Activated naive CD4-positive, alpha-beta T cell treated with anti-CD3 and anti-CD28 coated beads for 36 hours (primary cell): ENCODE measurements at regions of chr16 and their contacts with region 1.

Region 1: GRCh38 chr16:57265850-57266530 is 18.5 kb downstream of the PLLP start:
- DNase-seq: no peak
- H3K4me3 Mint-ChIP-seq: no peak overlapping the region
- H3K27ac Mint-ChIP-seq: peak overlapping the region; percentile 73
- H3K4me1 Mint-ChIP-seq: peaks cover 49% of the 10 kb centered on the region
- H3K27me3 Mint-ChIP-seq: no peaks in the 10 kb centered on the region

Region 2: GRCh38 chr16:57235128-57236021 is 30.6 kb before region 1 on chr16:
- CTCF ChIA-PET with region 1: no interaction called
- intact Hi-C with region 1: no loop called
- DNase-seq: peak; percentile 67
- H3K4me3 Mint-ChIP-seq: no peak overlapping the region
- H3K27ac Mint-ChIP-seq: peak overlapping the region; percentile 6
- H3K4me1 Mint-ChIP-seq: peaks cover 14% of the 10 kb centered on the region
- H3K27me3 Mint-ChIP-seq: no peaks in the 10 kb centered on the region

Region 3: GRCh38 chr16:57277586-57277985 is 11.6 kb after region 1 on chr16:
- CTCF ChIA-PET with region 1: interaction called, 8 read pairs
- intact Hi-C with region 1: loop called (anchors 1 kb)
- DNase-seq: peak; percentile 85
- H3K4me3 Mint-ChIP-seq: no peak overlapping the region
- H3K27ac Mint-ChIP-seq: peak overlapping the region; percentile 73
- H3K4me1 Mint-ChIP-seq: peaks cover 40% of the 10 kb centered on the region
- H3K27me3 Mint-ChIP-seq: no peaks in the 10 kb centered on the region